Kidney (tissue), 22 donors: ENCODE measurements at regions of chr3 and their contacts with region 1.

Region 1: DNA sequence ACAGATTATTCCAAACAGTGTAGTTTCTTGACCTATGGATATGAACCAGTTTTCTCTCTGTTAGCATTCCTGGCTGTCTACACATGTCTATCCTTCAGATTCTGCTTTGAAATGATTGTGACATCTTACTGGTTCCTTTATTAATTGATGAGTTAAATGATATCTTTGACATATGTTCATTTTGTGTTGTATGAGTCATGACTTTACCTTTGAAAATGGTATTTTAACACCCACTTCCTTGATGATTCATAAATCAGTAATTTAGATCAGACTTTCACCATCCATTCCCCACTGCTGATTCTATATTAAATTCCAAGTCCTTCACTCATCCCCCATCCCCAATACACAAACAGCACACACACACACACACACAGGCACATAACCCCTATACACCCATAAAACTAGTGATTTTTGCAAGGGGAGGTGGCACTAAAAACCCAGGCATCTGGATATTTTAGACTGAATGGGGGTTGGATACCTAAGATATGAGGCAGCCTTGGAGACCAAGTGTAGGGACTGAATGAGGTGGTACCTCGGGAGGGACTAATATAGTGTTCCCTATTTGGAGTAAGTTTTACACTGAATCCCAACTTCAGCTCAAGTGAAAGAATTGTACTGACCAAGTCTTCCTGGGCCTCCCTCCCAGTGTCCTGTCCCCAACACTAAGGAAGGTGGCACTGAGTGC is 9.7 kb downstream of the CCK start:
- DNase-seq: no peak
- H3K4me3 ChIP-seq: no peak overlapping the region
- H3K27ac ChIP-seq: no peak overlapping the region
- H3K4me1 ChIP-seq: no peaks in the 10 kb centered on the region
- H3K27me3 ChIP-seq: no peaks in the 10 kb centered on the region
- CTCF ChIP-seq: no peak

Region 2: GRCh38 chr3:42159706-42160472 is 96.4 kb before region 1 on chr3:
- intact Hi-C with region 1: no loop called
- DNase-seq: peak; percentile 86 to 90 (median 88)
- H3K4me3 ChIP-seq: peak overlapping the region in 2 of 3 donors; percentile 22 to 45
- H3K27ac ChIP-seq: no peak overlapping the region
- H3K4me1 ChIP-seq: peaks cover 0 to 24% (median 2%) of the 10 kb centered on the region in 3 donors
- H3K27me3 ChIP-seq: no peaks in the 10 kb centered on the region
- CTCF ChIP-seq: no peak

Region 3: GRCh38 chr3:42443819-42444436 is 187.7 kb after region 1 on chr3:
- intact Hi-C with region 1: loop called (anchors 10 kb)
- DNase-seq: peak; percentile 83 to 90 (median 86)
- H3K4me3 ChIP-seq: no peak overlapping the region
- H3K27ac ChIP-seq: no peak overlapping the region
- H3K4me1 ChIP-seq: no peaks in the 10 kb centered on the region
- H3K27me3 ChIP-seq: no peaks in the 10 kb centered on the region
- CTCF ChIP-seq: peak; percentile 98

Region 4: GRCh38 chr3:42647821-42648459 is 391.7 kb after region 1 on chr3:
- intact Hi-C with region 1: no loop called
- DNase-seq: no peak
- H3K4me3 ChIP-seq: no peak overlapping the region
- H3K27ac ChIP-seq: no peak overlapping the region
- H3K4me1 ChIP-seq: peaks cover 0 to 9% (median 6%) of the 10 kb centered on the region in 3 donors
- H3K27me3 ChIP-seq: no peaks in the 10 kb centered on the region
- CTCF ChIP-seq: no peak